Caco-2 (cell line): ENCODE measurements at regions of chr20 and their contacts with region 1.

Region 1: GRCh38 chr20:53492212-53492611 is 101.4 kb downstream of the ZNF217 start:
- DNase-seq: peak in 1 of 2 experiments; percentile 6
- H3K4me3 ChIP-seq: no peak overlapping the region
- H3K4me3 Mint-ChIP-seq: no peak overlapping the region
- H3K27ac Mint-ChIP-seq: no peak overlapping the region
- H3K4me1 ChIP-seq: peaks cover 12% of the 10 kb centered on the region; the same call in 1 of the 2 replicates
- H3K4me1 Mint-ChIP-seq: peaks cover 20% of the 10 kb centered on the region
- H3K27me3 ChIP-seq: no peaks in the 10 kb centered on the region
- H3K27me3 Mint-ChIP-seq: no peaks in the 10 kb centered on the region
- CTCF ChIP-seq: no peak

Region 2: GRCh38 chr20:52991830-52992229 is 500.4 kb before region 1 on chr20:
- CTCF ChIA-PET with region 1: no interaction called
- POLR2A ChIA-PET with region 1: no interaction called
- intact Hi-C with region 1: no loop called
- DNase-seq: no peak
- H3K4me3 ChIP-seq: no peak overlapping the region
- H3K4me3 Mint-ChIP-seq: no peak overlapping the region
- H3K27ac Mint-ChIP-seq: no peak overlapping the region
- H3K4me1 ChIP-seq: no peaks in the 10 kb centered on the region
- H3K4me1 Mint-ChIP-seq: no peaks in the 10 kb centered on the region
- H3K27me3 ChIP-seq: no peaks in the 10 kb centered on the region
- H3K27me3 Mint-ChIP-seq: peaks cover 10% of the 10 kb centered on the region
- CTCF ChIP-seq: no peak

Region 3: DNA sequence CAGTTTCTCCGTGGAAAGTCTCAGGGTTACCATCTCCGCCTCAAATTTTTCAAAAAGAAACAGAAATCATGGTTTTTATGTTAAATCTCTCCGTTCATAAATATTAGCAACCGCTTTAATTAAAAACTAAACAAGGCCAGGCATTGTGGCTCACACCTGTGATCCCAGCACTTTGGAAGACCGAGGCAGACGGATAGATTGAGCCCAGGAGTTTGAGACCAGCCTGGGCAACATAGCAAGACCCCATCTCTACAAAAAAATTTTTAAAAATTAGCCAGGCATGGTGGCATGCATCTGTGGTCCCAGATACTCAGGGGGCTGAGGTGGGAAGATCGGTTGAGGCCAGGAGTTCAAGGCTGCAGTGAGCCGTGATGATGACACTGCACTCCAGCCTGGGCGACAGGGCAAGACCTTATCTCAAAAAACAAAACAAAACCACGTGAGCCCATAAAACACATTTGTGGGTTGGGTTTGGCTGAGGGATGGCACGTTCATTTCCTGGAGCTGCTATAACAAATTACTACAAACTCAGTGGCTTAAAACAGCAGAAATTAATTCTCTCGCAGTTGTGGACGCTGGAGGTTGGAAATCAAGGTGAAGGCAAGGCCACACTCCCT is 121.8 kb before region 1 on chr20:
- CTCF ChIA-PET with region 1: no interaction called
- POLR2A ChIA-PET with region 1: no interaction called
- intact Hi-C with region 1: no loop called
- DNase-seq: no peak
- H3K4me3 ChIP-seq: no peak overlapping the region
- H3K4me3 Mint-ChIP-seq: no peak overlapping the region
- H3K27ac Mint-ChIP-seq: no peak overlapping the region
- H3K4me1 ChIP-seq: no peaks in the 10 kb centered on the region
- H3K4me1 Mint-ChIP-seq: no peaks in the 10 kb centered on the region
- H3K27me3 ChIP-seq: no peaks in the 10 kb centered on the region
- H3K27me3 Mint-ChIP-seq: peaks cover 10% of the 10 kb centered on the region
- CTCF ChIP-seq: no peak

Region 4: GRCh38 chr20:53413186-53413631 is 79.0 kb before region 1 on chr20:
- CTCF ChIA-PET with region 1: no interaction called
- POLR2A ChIA-PET with region 1: no interaction called
- intact Hi-C with region 1: loop called (anchors 1 kb)
- DNase-seq: peak; percentile 92 to 93
- H3K4me3 ChIP-seq: no peak overlapping the region
- H3K4me3 Mint-ChIP-seq: peak overlapping the region; percentile 48
- H3K27ac Mint-ChIP-seq: no peak overlapping the region
- H3K4me1 ChIP-seq: no peaks in the 10 kb centered on the region
- H3K4me1 Mint-ChIP-seq: no peaks in the 10 kb centered on the region
- H3K27me3 ChIP-seq: no peaks in the 10 kb centered on the region; the same call in 1 of the 2 replicates
- H3K27me3 Mint-ChIP-seq: no peaks in the 10 kb centered on the region
- CTCF ChIP-seq: peak; percentile 97 to 100